ENCODE measurements at regions of chr14 and their contacts with region 1.

Region 1: GRCh38 chr14:105123981-105124765 is 44.4 kb downstream of the JAG2 start:
- DNase-seq: no peak
- ATAC-seq: no peak

Region 2: DNA sequence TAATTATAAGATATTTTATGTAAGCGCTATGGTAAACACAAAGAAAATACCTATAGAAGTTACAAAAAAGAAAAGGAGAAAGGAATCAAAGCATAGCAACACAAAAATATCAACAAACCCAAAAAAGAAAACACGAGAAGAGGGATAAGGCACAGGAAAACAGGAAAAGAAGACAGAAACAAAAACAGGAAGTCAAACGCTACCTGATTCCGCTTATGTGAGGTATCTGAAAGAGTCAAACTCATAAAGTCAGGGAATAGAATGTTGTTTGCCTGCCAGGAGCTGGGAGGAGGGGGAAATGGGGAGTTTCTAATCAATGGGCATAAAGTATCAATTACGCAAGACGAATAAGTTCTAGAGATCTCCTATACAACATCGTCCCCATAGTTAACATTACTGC is 19.0 kb before region 1 on chr14:
- intact Hi-C with region 1: loop called (anchors 2 kb)
- DNase-seq: no peak
- ATAC-seq: no peak